ENCODE measurements at regions of chr10 and their contacts with region 1.

Region 1: DNA sequence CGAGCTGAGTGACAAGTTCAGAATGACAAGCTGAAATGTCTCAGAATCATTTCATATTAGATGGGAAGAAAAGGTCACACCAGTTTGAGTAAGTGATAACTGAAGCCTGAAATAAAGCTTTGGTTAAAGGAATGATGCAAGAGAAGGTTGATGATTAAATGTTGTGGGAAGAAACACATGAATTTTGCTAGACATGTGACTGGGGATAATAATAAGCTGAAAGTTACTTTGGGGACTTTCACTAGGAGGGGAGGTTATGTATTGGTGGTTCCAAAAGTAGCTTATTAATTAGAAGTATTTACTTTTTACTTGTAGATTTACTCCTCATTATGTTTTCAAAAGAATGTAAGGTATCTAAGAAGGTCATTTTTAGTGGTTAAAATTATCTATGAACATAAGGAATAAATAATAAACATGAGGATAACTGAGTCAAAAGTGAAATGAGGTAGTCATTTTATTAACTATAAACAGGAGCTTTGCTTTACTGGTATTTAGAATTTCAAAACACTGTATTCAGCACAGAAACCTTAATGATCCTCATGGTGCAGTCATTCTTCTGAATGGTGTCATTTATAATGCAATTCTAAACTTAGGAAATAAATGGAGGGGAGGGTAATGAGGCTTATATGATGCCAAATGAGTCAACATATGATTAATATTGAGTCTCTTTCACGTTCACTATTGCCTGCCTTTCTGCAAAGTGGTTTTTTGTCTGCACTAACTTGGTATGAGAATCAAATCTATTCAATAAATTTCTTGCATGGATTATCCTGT is 63.7 kb downstream of the PRKG1 start:
- DNase-seq: peak; percentile 93
- ATAC-seq: peak; percentile 97
- H3K4me3 ChIP-seq: no peak overlapping the region
- H3K27ac ChIP-seq: peak overlapping the region; percentile 1; the same call in 1 of the 2 replicates
- H3K4me1 ChIP-seq: peaks cover 17% of the 10 kb centered on the region
- H3K27me3 ChIP-seq: no peaks in the 10 kb centered on the region
- CTCF ChIP-seq: no peak

Region 2: GRCh38 chr10:51156926-51157325 is 19.0 kb after region 1 on chr10:
- CTCF ChIA-PET with region 1: no interaction called
- POLR2A ChIA-PET with region 1: no interaction called
- intact Hi-C with region 1: loop called (anchors 2 kb)
- DNase-seq: peak; percentile 91
- ATAC-seq: peak; percentile 90
- H3K4me3 ChIP-seq: peak overlapping the region; percentile 2; the same call in 1 of the 2 replicates
- H3K27ac ChIP-seq: no peak overlapping the region
- H3K4me1 ChIP-seq: peaks cover 10% of the 10 kb centered on the region
- H3K27me3 ChIP-seq: no peaks in the 10 kb centered on the region
- CTCF ChIP-seq: no peak

Region 3: GRCh38 chr10:51204694-51205093 is 66.8 kb after region 1 on chr10:
- CTCF ChIA-PET with region 1: no interaction called
- POLR2A ChIA-PET with region 1: no interaction called
- intact Hi-C with region 1: no loop called
- DNase-seq: no peak
- ATAC-seq: peak; percentile 48; the same call in 1 of the 2 replicates
- H3K4me3 ChIP-seq: no peak overlapping the region
- H3K27ac ChIP-seq: no peak overlapping the region
- H3K4me1 ChIP-seq: no peaks in the 10 kb centered on the region
- H3K27me3 ChIP-seq: peaks cover 3% of the 10 kb centered on the region; the same call in 1 of the 2 replicates
- CTCF ChIP-seq: no peak

Measured in PC-3 (cell line).